ENCODE measurements at regions of chr9 and their contacts with region 1.

Region 1: GRCh38 chr9:112333639-112334431 is 416 bp upstream of the PTBP3 start:
- DNase-seq: peak in 1 of 2 donors; percentile 92
- H3K4me3 ChIP-seq: peak overlapping the region; percentile 77 to 81
- H3K27ac ChIP-seq: peak overlapping the region; percentile 99
- H3K4me1 ChIP-seq: peaks cover 31% of the 10 kb centered on the region
- H3K27me3 ChIP-seq: no peaks in the 10 kb centered on the region
- CTCF ChIP-seq: peak in 2 of 3 experiments; percentile 58 to 71
- POLR2A ChIP-seq: peak in 1 of 2 donors; percentile 6

Region 2: DNA sequence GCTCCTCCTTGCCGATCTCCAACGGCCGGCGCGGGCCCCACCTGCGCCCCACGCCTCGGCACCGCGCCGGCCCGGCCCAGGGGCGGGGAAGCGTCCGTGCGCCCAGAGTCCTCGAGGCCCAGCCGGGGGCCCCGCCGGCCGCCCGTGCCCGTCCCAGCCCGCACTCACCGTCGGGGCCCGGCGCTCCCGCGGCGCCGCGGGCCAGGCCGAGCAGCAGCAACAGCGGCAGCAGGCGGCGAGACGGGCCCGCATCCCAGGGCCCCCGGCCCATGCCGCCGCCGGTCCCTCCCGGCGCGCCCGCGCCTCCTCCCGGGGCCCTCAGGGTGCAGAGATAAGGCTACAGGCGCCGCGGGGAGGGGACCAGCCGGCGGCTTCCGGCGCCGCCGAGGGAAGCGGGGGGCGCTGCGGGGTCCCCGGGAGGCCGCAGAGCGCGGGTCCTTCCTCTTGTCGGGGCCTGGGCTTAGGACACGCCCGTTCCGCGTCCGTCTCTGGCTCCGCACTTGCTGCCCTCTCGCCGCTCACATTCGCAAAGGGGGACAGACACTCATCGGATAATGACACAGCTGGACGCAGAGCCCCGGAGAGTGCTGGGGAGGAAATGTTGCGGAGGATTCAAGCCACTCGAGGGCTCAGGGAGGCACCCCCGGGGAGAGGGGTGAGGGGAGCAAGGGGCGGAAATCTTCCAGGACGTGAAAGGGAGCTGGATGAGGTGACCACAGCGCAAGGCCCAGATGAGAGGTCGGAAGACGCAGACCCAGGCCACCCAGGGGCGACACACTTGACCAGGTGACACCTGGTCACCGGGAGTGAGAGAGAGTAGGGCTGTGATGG is 158.7 kb before region 1 on chr9 and contains the start of gene SUSD1:
- intact Hi-C with region 1: loop called (anchors 5 kb)
- DNase-seq: no peak
- H3K4me3 ChIP-seq: peak within 1 kb of the TSS; percentile 61 to 86
- H3K27ac ChIP-seq: peak within 1 kb of the TSS; percentile 61
- H3K4me1 ChIP-seq: peaks cover 29% of the 10 kb centered on the region
- H3K27me3 ChIP-seq: no peaks in the 10 kb centered on the region
- CTCF ChIP-seq: no peak
- POLR2A ChIP-seq: no peak
- total RNA-seq, gene SUSD1: 10.8 TPM